ENCODE measurements at regions of chr6 and their contacts with region 1.

Region 1: GRCh38 chr6:26383624-26384417 is 913 bp downstream of the BTN2A2 start:
- DNase-seq: peak; percentile 57
- ATAC-seq: peak; percentile 54
- H3K4me3 Mint-ChIP-seq: peak overlapping the region; percentile 85
- H3K27ac Mint-ChIP-seq: peak overlapping the region; percentile 92
- H3K4me1 Mint-ChIP-seq: peaks cover 14% of the 10 kb centered on the region
- H3K27me3 Mint-ChIP-seq: no peaks in the 10 kb centered on the region

Region 2: DNA sequence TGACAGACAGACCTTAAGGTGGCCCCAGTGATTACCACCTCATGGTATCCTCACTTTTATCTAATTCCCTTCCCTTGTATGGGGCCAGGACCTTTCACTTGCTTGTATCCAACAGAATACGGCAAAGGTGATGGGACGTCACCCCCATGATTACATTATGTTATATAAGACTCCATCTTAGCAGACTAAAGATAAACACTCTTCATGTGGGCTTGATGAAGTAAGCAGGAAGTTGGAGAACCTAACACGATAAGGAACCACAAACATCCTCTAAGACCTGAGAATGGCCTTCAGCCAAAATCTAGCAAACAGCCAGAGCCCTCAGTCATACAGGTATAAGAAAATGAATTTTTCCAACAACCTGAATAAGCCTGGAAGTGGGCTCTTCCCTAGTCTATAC is 517.8 kb before region 1 on chr6:
- CTCF ChIA-PET with region 1: no interaction called
- POLR2A ChIA-PET with region 1: no interaction called
- intact Hi-C with region 1: no loop called
- DNase-seq: peak; percentile 8
- ATAC-seq: peak; percentile 66
- H3K4me3 Mint-ChIP-seq: no peak overlapping the region
- H3K27ac Mint-ChIP-seq: no peak overlapping the region
- H3K4me1 Mint-ChIP-seq: peaks cover 16% of the 10 kb centered on the region
- H3K27me3 Mint-ChIP-seq: no peaks in the 10 kb centered on the region

Region 3: GRCh38 chr6:26366504-26366903 is 17.3 kb before region 1 on chr6:
- CTCF ChIA-PET with region 1: interaction called, 3 read pairs
- POLR2A ChIA-PET with region 1: no interaction called
- intact Hi-C with region 1: loop called in 1 of 2 experiments (anchors 1 kb)
- DNase-seq: no peak
- ATAC-seq: no peak
- H3K4me3 Mint-ChIP-seq: no peak overlapping the region
- H3K27ac Mint-ChIP-seq: peak overlapping the region; percentile 61
- H3K4me1 Mint-ChIP-seq: peaks cover 58% of the 10 kb centered on the region
- H3K27me3 Mint-ChIP-seq: no peaks in the 10 kb centered on the region

Region 4: DNA sequence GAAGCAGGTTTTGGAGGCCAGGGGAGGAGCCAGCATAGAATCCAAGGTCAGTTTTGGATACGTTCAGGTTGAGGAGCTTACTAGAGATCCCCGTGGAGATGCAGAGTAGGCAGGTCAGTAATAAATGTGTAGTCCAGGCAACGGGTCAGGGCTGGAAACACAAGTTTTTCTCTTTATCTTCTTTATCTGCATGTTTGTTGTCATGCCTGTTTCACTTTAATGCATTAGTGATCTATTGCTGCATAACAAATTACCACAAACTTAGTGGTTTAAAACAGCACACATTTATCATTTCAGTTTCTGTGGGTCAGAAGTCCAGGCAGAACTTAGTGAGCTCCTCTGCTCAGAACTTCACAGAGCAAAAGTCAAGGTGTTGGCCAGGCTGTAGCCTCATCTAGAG is 12.5 kb after region 1 on chr6:
- CTCF ChIA-PET with region 1: no interaction called
- POLR2A ChIA-PET with region 1: no interaction called
- intact Hi-C with region 1: no loop called
- DNase-seq: no peak
- ATAC-seq: no peak
- H3K4me3 Mint-ChIP-seq: no peak overlapping the region
- H3K27ac Mint-ChIP-seq: no peak overlapping the region
- H3K4me1 Mint-ChIP-seq: peaks cover 7% of the 10 kb centered on the region
- H3K27me3 Mint-ChIP-seq: no peaks in the 10 kb centered on the region

Region 5: GRCh38 chr6:26421259-26422144 is 37.7 kb after region 1 on chr6:
- CTCF ChIA-PET with region 1: no interaction called
- POLR2A ChIA-PET with region 1: no interaction called
- intact Hi-C with region 1: loop called in 1 of 2 experiments (anchors 2 kb)
- DNase-seq: peak; percentile 62
- ATAC-seq: peak; percentile 97
- H3K4me3 Mint-ChIP-seq: no peak overlapping the region
- H3K27ac Mint-ChIP-seq: no peak overlapping the region
- H3K4me1 Mint-ChIP-seq: peaks cover 5% of the 10 kb centered on the region
- H3K27me3 Mint-ChIP-seq: no peaks in the 10 kb centered on the region

Region 6: DNA sequence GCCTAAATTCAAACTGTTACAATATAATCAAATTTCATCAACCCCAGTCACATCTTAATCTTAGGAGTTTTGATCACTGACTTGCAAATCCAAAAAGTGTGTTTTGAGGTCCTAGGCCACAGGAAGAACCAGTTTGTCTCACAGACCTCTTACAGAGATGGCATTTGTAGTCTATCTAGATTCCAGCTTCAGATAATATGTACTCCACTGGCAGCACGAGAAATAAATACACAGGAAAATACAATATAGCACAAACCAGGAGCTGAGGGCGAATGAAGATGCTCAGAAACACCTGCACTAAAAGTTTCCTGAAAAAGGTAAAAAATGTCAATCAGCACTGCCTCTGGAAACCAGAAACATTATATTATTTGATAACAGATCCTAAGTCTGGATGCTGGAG is 55.8 kb after region 1 on chr6:
- CTCF ChIA-PET with region 1: no interaction called
- POLR2A ChIA-PET with region 1: no interaction called
- intact Hi-C with region 1: loop called in 1 of 2 experiments (anchors 2 kb)
- DNase-seq: no peak
- ATAC-seq: no peak
- H3K4me3 Mint-ChIP-seq: peak overlapping the region; percentile 96
- H3K27ac Mint-ChIP-seq: peak overlapping the region; percentile 98
- H3K4me1 Mint-ChIP-seq: peaks cover 40% of the 10 kb centered on the region
- H3K27me3 Mint-ChIP-seq: no peaks in the 10 kb centered on the region

Region 7: GRCh38 chr6:26457806-26458688 is 74.2 kb after region 1 on chr6 and contains the start of gene BTN2A1:
- CTCF ChIA-PET with region 1: no interaction called
- POLR2A ChIA-PET with region 1: no interaction called
- intact Hi-C with region 1: loop called in 1 of 2 experiments (anchors 1 kb)
- DNase-seq: peak; percentile 76
- ATAC-seq: peak; percentile 99
- H3K4me3 Mint-ChIP-seq: peak within 1 kb of the TSS; percentile 87
- H3K27ac Mint-ChIP-seq: peak within 1 kb of the TSS; percentile 97
- H3K4me1 Mint-ChIP-seq: peaks cover 45% of the 10 kb centered on the region
- H3K27me3 Mint-ChIP-seq: no peaks in the 10 kb centered on the region
- total RNA-seq, gene BTN2A1: 17.3 to 17.5 TPM

Measured in activated CD4-positive, alpha-beta T cell treated with anti-CD3 and anti-CD28 coated beads for 36 hours (primary cell).